ENCODE measurements at regions of chr3 and their contacts with region 1.

Region 1: GRCh38 chr3:69161587-69162307 is 39.4 kb upstream of the LMOD3 start:
- DNase-seq: no peak
- ATAC-seq: peak; percentile 66 to 69
- H3K4me3 ChIP-seq: no peak overlapping the region
- H3K27ac ChIP-seq: no peak overlapping the region
- H3K4me1 ChIP-seq: no peaks in the 10 kb centered on the region
- H3K27me3 ChIP-seq: no peaks in the 10 kb centered on the region

Region 2: GRCh38 chr3:68363821-68364220 is 797.9 kb before region 1 on chr3:
- intact Hi-C with region 1: no loop called
- DNase-seq: no peak
- ATAC-seq: no peak
- H3K4me3 ChIP-seq: no peak overlapping the region
- H3K27ac ChIP-seq: no peak overlapping the region
- H3K4me1 ChIP-seq: no peaks in the 10 kb centered on the region
- H3K27me3 ChIP-seq: no peaks in the 10 kb centered on the region

Region 3: GRCh38 chr3:69276884-69277283 is 115.1 kb after region 1 on chr3:
- intact Hi-C with region 1: loop called in 1 of 4 experiments (anchors 2 kb)
- DNase-seq: no peak
- ATAC-seq: no peak
- H3K4me3 ChIP-seq: no peak overlapping the region
- H3K27ac ChIP-seq: no peak overlapping the region
- H3K4me1 ChIP-seq: no peaks in the 10 kb centered on the region
- H3K27me3 ChIP-seq: no peaks in the 10 kb centered on the region

Region 4: GRCh38 chr3:69299361-69299760 is 137.6 kb after region 1 on chr3:
- intact Hi-C with region 1: loop called in 1 of 4 experiments (anchors 5 kb)
- DNase-seq: no peak
- ATAC-seq: no peak
- H3K4me3 ChIP-seq: no peak overlapping the region
- H3K27ac ChIP-seq: no peak overlapping the region
- H3K4me1 ChIP-seq: peaks cover 4% of the 10 kb centered on the region
- H3K27me3 ChIP-seq: no peaks in the 10 kb centered on the region

Region 5: DNA sequence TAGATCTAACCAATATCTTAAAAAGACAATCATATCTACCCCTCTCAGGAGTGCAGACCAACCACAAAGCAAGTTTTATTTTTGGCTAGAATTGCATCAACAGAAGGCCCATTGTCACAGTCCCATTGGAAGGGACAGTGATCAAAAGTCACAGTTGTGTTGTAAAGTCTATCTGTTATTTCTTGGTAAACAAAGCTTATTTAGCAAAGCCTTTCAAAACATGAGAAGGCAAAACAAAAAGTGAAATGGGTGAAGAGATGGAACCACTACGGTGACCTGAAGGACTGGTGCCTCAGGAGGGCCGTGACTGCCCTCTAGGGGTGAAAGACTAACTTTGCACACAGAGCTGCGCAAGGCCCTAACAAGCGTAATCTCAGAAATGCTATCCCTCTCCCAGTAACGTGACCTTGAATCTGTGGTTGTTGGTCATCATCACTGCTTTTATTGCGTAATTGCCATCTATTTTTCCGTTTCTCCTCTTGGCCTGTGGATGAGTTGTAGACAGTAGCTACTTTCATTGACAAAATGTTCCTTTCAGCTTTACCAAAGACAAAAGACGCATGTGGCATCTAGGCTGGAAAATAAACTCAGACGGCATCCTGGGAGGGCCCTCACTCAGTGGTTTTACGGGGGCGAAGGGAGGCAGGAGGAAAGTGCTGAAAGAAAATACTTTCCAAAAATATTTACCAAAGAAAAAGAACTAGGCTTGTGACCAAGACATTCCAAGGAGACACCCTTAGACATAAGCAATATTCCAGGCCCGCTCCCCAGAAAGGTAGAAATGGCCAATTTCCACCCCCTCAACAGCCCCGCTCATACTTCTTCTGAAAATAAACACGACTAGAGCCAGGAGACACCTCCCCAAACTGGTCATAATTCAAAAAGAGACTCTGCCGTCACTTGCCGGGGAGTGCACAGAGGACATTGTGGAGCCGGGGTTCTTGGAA is 144.8 kb after region 1 on chr3:
- intact Hi-C with region 1: loop called in 3 of 4 experiments (anchors 2 to 5 kb)
- DNase-seq: peak; percentile 73 to 82 (median 79)
- ATAC-seq: peak; percentile 95 to 97
- H3K4me3 ChIP-seq: no peak overlapping the region
- H3K27ac ChIP-seq: peak overlapping the region; percentile 59
- H3K4me1 ChIP-seq: no peaks in the 10 kb centered on the region
- H3K27me3 ChIP-seq: no peaks in the 10 kb centered on the region

Region 6: GRCh38 chr3:69410250-69410649 is 248.5 kb after region 1 on chr3:
- intact Hi-C with region 1: loop called in 2 of 4 experiments (anchors 5 to 10 kb)
- DNase-seq: peak; percentile 65 to 83 (median 77)
- ATAC-seq: peak; percentile 78 to 86
- H3K4me3 ChIP-seq: no peak overlapping the region
- H3K27ac ChIP-seq: no peak overlapping the region
- H3K4me1 ChIP-seq: no peaks in the 10 kb centered on the region
- H3K27me3 ChIP-seq: no peaks in the 10 kb centered on the region

Region 7: DNA sequence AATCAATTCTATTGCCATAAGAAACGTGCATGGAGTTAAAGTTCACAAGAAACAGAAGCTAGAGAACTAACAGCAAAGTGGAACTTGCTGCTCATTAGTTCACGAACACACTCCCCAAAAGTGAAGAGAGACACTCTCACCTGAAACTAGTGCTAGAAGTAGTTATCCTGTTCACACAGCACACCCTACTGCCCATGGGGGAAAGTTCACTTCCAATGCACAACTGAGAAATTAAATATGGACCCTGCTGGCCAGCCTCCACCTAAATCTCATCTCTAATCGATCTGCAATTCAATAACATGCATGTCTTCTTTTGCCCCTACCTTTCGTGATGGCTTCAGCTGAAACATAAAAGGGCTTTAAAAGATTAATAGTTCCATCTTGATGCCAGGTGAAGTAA is 263.5 kb after region 1 on chr3:
- intact Hi-C with region 1: loop called in 3 of 4 experiments (anchors 5 to 10 kb)
- DNase-seq: no peak
- ATAC-seq: no peak
- H3K4me3 ChIP-seq: no peak overlapping the region
- H3K27ac ChIP-seq: no peak overlapping the region
- H3K4me1 ChIP-seq: peaks cover 5% of the 10 kb centered on the region
- H3K27me3 ChIP-seq: no peaks in the 10 kb centered on the region

Region 8: GRCh38 chr3:69671082-69671952 is 509.6 kb after region 1 on chr3:
- intact Hi-C with region 1: loop called (anchors 5 to 10 kb)
- DNase-seq: peak in 2 of 3 donors; percentile 38 to 55
- ATAC-seq: peak; percentile 53 to 67
- H3K4me3 ChIP-seq: no peak overlapping the region
- H3K27ac ChIP-seq: no peak overlapping the region
- H3K4me1 ChIP-seq: peaks cover 2% of the 10 kb centered on the region
- H3K27me3 ChIP-seq: no peaks in the 10 kb centered on the region

Region 9: DNA sequence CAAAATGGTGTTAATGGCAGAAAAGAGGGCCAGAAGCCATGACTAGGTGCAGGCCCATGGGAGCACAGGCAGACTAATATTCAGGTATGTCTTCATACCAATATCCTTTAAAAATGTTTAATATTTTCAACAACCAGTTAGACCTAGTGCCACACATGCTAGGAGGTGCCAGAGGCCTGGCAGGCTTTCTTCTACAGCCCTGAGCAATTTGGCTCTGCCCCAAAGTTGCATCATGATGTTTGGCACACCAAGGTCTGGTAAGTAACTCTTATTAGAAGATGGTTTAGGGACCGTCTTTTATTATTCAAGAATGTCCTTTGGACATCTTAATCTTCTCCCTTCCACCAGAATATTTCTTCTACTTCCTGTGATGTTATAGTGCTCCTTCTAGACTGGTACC is 612.3 kb after region 1 on chr3:
- intact Hi-C with region 1: no loop called
- DNase-seq: peak; percentile 61 to 73 (median 69)
- ATAC-seq: peak in 1 of 2 donors; percentile 62
- H3K4me3 ChIP-seq: no peak overlapping the region
- H3K27ac ChIP-seq: no peak overlapping the region
- H3K4me1 ChIP-seq: peaks cover 5% of the 10 kb centered on the region
- H3K27me3 ChIP-seq: no peaks in the 10 kb centered on the region